GM13976 (cell line): ENCODE measurements at regions of chr10 and their contacts with region 1.

Region 1: GRCh38 chr10:103486336-103487160 is 7.0 kb upstream of the NEURL1 start:
- DNase-seq: no peak
- CTCF ChIP-seq: no peak

Region 2: GRCh38 chr10:103416436-103417147 is 70.0 kb before region 1 on chr10:
- in situ Hi-C with region 1: loop called (anchors 5 kb)
- DNase-seq: peak; percentile 59
- CTCF ChIP-seq: peak; percentile 72

Region 3: DNA sequence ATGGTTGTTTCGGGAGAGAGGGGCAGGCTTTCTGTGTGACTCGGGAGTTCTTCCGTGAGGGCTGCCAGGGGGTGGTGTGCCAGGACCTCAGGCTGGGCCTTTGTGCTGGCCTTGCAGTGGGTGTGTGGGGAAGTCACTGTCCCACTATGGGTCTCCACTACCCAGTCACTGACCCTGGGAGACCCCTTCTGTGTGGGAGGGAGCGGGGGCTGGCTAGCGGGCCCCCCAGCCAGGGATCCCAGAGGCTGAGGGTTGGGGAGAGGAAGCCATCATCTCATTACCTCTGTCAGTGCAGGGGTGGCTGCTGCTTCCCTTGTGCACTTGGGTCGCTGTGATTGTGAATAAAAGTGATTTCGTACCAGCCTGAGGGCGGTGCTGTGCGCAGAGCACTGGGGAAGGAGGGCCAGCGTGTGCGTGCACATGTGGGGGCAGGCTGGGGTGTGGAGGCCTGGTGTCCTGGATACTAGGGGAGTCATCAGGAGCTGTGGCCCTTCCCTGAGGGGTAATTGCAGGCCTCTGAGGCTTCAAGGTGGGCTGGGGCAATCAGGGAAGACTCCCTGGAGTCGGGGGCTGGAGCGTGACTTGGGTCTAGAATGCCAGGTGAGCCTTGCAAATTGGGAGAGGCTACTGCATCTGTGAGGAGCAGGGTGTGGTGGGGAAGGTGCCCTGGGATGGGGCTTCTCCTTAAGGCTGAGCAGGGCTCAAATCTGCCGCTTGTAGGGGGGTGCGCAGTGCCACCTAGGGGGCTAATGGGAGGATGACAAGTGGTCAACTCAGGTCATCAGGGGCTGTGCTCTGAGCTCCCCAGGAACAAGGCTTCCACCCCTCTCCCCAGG is 105.9 kb after region 1 on chr10:
- in situ Hi-C with region 1: no loop called
- DNase-seq: peak; percentile 89
- CTCF ChIP-seq: peak; percentile 64